ENCODE measurements at regions of chr4 and their contacts with region 1.

Region 1: GRCh38 chr4:56783986-56784385 is 37.5 kb downstream of the SPINK2 start:
- DNase-seq: no peak
- H3K4me3 Mint-ChIP-seq: no peak overlapping the region
- H3K27ac Mint-ChIP-seq: no peak overlapping the region
- H3K4me1 Mint-ChIP-seq: no peaks in the 10 kb centered on the region
- H3K27me3 Mint-ChIP-seq: peaks cover 2% of the 10 kb centered on the region

Region 2: DNA sequence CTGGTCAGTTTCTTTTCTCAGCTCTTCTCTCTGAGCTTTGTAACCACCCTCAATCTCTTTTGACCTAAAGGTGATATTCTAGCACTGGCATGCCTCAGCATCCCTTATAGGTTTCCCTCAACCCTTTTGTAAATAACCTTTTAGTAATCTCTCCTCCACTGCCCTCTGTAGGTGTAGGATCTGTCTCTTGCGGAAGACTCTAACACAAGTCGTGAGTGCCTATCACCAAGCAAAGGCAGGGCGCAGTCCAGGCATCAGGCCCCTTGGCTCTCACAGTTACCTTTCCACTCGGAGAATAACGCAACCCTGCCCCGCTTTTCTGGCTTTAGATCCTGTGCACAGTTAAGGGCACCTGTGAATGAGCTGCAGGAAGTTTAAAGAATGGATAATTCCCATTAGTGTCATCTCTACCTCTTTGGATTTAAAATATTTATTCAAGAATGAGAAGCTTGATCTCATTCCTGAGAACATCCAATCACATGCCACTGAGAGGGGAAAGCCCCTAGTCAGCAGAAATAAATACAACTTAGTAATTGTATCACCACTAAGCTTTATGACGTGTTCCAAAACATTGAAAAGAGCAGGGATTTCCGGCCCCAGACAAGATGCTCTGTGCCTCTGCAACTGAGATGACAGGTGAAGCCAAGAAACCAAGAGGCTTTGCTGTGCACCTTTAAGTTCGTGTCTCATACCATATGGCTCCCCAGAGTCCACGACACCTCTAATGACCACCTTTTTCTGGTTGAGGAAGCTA is 21.3 kb before region 1 on chr4:
- CTCF ChIA-PET with region 1: interaction called, 10 read pairs
- POLR2A ChIA-PET with region 1: no interaction called
- DNase-seq: peak; percentile 25
- H3K4me3 Mint-ChIP-seq: no peak overlapping the region
- H3K27ac Mint-ChIP-seq: no peak overlapping the region
- H3K4me1 Mint-ChIP-seq: peaks cover 45% of the 10 kb centered on the region
- H3K27me3 Mint-ChIP-seq: no peaks in the 10 kb centered on the region

Measured in activated CD4-positive, alpha-beta T cell treated with anti-CD3 and anti-CD28 coated beads, Interleukin-2, amount 10 ng/mL, durations not matched to agents 7 days and 5 days (primary cell).